GM12878 (cell line): ENCODE measurements at regions of chr11 and their contacts with region 1.

Region 1: GRCh38 chr11:113314389-113315301 is at the start of gene TTC12:
- DNase-seq: peak; percentile 64
- ATAC-seq: peak; percentile 99
- H3K4me3 ChIP-seq: peak within 1 kb of the TSS; percentile 83
- H3K27ac ChIP-seq: peak within 1 kb of the TSS; percentile 66
- H3K4me1 ChIP-seq: peaks cover 10% of the 10 kb centered on the region
- H3K27me3 ChIP-seq: no peaks in the 10 kb centered on the region
- CTCF ChIP-seq: no peak
- EP300 ChIP-seq: no peak
- POLR2A ChIP-seq: peak; percentile 95
- RAD21 ChIP-seq: no peak
- polyA plus RNA-seq, gene TTC12: 3.7 to 7.9 TPM

Region 2: DNA sequence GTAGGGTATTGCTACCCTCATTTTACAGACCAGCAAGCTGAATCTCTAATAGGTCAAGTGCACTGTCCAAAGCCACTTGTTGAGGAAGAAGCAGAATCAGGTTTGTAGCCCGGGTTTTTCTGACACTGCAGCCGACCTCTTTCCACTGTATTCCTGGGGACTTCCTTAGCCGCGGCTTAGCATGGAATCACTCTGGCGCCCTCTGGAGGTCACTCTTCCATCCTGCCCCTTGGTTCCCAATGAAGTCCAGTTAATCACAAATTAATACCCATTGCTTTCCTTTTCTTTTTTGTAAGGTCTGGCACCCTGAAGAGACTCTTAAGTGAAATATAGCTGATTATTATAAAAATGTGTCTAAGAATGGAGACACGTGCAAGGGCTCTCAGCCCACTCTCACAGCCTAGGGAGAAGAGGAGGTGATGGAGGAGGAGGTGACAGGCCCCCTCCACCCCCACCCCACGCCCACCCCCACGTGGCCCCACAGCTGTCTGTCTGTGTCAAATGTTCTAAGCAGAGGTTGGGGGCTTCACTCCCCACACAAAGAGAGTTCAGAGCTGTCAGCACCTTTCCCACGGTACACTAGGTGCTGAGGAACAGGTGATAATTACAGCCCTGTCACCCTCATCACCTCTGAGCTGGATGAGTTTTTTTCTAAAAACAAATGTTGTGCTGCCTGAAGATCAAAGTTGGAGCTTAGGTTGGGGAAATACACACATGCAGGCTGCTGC is 218.2 kb after region 1 on chr11:
- CTCF ChIA-PET with region 1: interaction called, 3 read pairs
- POLR2A ChIA-PET with region 1: no interaction called
- RAD21 ChIA-PET with region 1: no interaction called
- SMC1A ChIA-PET with region 1: interaction called, 3 read pairs
- in situ Hi-C with region 1: loop called (anchors 5 kb)
- intact Hi-C with region 1: no loop called
- DNase-seq: no peak
- ATAC-seq: peak; percentile 81
- H3K4me3 ChIP-seq: no peak overlapping the region
- H3K27ac ChIP-seq: no peak overlapping the region
- H3K4me1 ChIP-seq: no peaks in the 10 kb centered on the region
- H3K27me3 ChIP-seq: no peaks in the 10 kb centered on the region
- CTCF ChIP-seq: peak; percentile 81 to 83 (median 83)
- EP300 ChIP-seq: no peak
- POLR2A ChIP-seq: no peak
- RAD21 ChIP-seq: peak; percentile 79

Region 3: DNA sequence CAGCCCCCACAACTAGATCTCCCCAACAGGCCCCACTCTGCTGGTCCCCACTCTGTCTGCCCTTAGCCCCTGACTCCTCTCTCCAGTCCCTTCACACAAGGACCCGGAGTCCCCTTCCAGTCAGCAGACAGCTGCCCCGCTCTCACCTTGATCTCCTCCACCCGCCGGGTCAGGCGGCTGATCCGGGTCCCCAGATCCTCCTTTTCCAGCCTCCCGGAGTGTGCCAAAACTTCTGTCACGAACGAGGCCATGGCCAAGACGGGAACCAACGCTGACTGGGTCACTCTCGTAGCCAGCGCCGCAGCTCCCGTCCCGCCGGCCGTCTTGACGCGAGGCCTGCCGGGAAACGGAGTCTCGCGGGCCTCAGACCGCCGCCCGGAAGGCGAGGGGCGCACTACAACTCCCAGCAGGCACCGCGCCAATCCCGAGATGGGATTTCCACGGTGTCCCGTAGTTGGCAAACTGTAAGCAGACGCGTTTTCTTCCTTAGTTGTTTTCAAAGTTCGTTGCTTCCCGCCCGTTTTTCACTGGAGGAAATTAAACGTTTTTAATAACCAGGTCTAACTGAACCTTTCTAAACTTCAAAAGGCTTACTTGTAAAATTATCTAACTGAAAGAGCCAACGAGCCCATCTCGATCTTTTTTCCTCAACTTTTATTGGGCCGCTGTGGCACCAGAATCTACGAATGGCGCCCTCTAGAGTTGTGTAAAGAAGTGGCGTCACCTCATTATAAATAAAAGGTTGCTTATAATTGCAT is 458.9 kb after region 1 on chr11 and contains the start of gene ZW10:
- CTCF ChIA-PET with region 1: no interaction called
- POLR2A ChIA-PET with region 1: no interaction called
- RAD21 ChIA-PET with region 1: no interaction called
- SMC1A ChIA-PET with region 1: no interaction called
- in situ Hi-C with region 1: loop called (anchors 10 kb)
- intact Hi-C with region 1: no loop called
- DNase-seq: peak; percentile 86
- ATAC-seq: peak; percentile 100
- H3K4me3 ChIP-seq: peak within 1 kb of the TSS; percentile 91
- H3K27ac ChIP-seq: peak within 1 kb of the TSS; percentile 80
- H3K4me1 ChIP-seq: no peaks in the 10 kb centered on the region
- H3K27me3 ChIP-seq: no peaks in the 10 kb centered on the region
- CTCF ChIP-seq: peak; percentile 61 to 83 (median 67)
- EP300 ChIP-seq: no peak
- POLR2A ChIP-seq: peak; percentile 93
- RAD21 ChIP-seq: peak; percentile 32; the same call in 1 of the 2 replicates
- polyA plus RNA-seq, gene ZW10: 5.4 to 8.6 TPM

Region 4: GRCh38 chr11:114059278-114059983 is 744.8 kb after region 1 on chr11 and contains the start of gene ZBTB16:
- CTCF ChIA-PET with region 1: no interaction called
- POLR2A ChIA-PET with region 1: no interaction called
- RAD21 ChIA-PET with region 1: no interaction called
- SMC1A ChIA-PET with region 1: no interaction called
- in situ Hi-C with region 1: no loop called
- intact Hi-C with region 1: no loop called
- DNase-seq: no peak
- ATAC-seq: no peak
- H3K4me3 ChIP-seq: no peak within 1 kb of the TSS
- H3K27ac ChIP-seq: no peak within 1 kb of the TSS
- H3K4me1 ChIP-seq: no peaks in the 10 kb centered on the region
- H3K27me3 ChIP-seq: peaks cover 12% of the 10 kb centered on the region in 2 experiments
- CTCF ChIP-seq: no peak
- EP300 ChIP-seq: no peak
- POLR2A ChIP-seq: no peak
- RAD21 ChIP-seq: no peak
- polyA plus RNA-seq, gene ZBTB16: not detected